ENCODE measurements at regions of chr5 and their contacts with region 1.

Region 1: GRCh38 chr5:76175051-76175666 is 92.0 kb downstream of the SV2C start:
- DNase-seq: peak; percentile 72
- ATAC-seq: peak; percentile 85
- H3K4me3 Mint-ChIP-seq: no peak overlapping the region
- H3K27ac Mint-ChIP-seq: no peak overlapping the region
- H3K4me1 Mint-ChIP-seq: peaks cover 14% of the 10 kb centered on the region
- H3K27me3 Mint-ChIP-seq: no peaks in the 10 kb centered on the region
- CTCF ChIP-seq: peak; percentile 55

Region 2: DNA sequence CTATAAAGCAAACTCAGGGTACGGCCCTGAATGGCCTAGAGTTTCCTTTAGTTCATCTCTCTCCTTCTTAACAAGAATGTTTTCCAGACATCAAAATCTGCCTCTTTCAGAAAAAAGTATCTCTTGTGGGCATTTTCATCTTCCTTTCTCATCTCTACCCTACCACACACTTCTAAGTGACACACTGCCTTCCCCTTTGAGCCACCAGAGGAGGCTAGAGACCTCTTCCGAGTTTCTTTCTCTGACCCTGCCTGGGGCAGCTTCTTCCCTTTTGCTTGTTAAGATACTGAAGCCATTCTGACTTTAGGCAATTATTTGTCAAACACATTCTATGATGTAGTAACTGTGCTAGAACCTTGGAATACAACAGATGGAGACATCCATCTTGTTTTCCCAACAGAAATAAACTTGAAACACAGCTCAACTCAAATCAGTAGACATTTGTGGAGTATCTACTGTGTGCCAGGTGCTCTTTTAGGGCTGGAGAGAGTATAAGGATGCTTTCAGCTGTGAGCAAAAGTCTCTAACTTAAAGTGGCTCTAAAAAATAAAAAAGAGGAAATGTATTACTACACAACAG is 100.6 kb before region 1 on chr5:
- CTCF ChIA-PET with region 1: interaction called, 42 read pairs
- POLR2A ChIA-PET with region 1: no interaction called
- DNase-seq: peak; percentile 42
- ATAC-seq: peak; percentile 85
- H3K4me3 Mint-ChIP-seq: no peak overlapping the region
- H3K27ac Mint-ChIP-seq: no peak overlapping the region
- H3K4me1 Mint-ChIP-seq: no peaks in the 10 kb centered on the region
- H3K27me3 Mint-ChIP-seq: peaks cover 44% of the 10 kb centered on the region
- CTCF ChIP-seq: peak; percentile 63

Region 3: DNA sequence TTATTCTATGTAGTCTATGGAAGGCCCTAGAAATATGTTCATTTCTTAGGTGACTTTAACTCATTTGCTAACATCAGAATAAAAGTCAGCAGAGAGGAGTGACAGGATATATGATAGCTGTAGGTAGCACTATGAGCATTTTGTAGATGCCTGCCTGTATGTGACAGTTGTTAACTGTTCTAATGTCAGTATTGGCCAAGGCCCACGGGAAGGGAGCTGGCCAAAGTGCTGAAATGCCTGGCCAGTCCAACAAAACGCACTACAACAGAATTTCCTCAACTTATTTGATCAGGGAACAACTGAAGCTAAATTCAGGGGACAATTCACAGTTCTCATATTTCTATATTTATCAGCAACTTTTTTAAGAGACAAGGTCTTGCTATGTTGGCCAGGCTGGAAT is 71.1 kb before region 1 on chr5:
- CTCF ChIA-PET with region 1: interaction called, 31 read pairs
- POLR2A ChIA-PET with region 1: no interaction called
- DNase-seq: peak; percentile 65
- ATAC-seq: peak; percentile 79
- H3K4me3 Mint-ChIP-seq: no peak overlapping the region
- H3K27ac Mint-ChIP-seq: no peak overlapping the region
- H3K4me1 Mint-ChIP-seq: no peaks in the 10 kb centered on the region
- H3K27me3 Mint-ChIP-seq: no peaks in the 10 kb centered on the region
- CTCF ChIP-seq: no peak

Region 4: DNA sequence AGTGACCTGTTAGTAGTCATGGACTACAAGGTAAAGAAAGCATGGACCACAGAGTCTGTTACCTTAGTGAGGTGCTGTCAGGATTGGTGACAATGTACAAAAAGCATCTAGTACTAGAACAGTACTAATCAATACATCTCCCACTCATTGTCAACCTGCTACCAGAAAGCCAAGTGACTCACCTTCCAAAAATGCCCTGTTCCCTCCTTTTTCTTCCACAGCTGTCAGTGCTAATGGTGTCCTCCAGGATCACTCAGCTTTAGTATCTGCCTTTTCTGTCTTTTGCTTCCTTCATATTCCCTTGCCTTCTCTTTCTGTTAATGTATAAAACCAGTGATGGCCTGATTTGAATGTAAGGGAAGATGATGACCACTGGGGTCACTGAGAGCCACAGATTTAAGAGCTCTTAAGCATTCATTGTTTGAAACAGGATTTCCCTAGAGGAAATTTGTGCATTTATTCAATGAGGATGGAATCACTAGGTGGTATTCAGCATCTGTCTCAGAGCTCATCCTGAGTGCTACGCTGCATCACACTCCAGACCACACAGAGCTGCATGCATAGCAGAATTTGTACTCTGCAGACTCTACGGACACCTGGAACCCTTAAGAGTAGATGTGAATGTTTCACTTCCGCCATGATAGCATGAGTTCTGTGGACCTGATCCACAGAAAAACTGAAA is 21.0 kb before region 1 on chr5:
- CTCF ChIA-PET with region 1: interaction called, 11 read pairs
- POLR2A ChIA-PET with region 1: no interaction called
- DNase-seq: no peak
- ATAC-seq: no peak
- H3K4me3 Mint-ChIP-seq: no peak overlapping the region
- H3K27ac Mint-ChIP-seq: no peak overlapping the region
- H3K4me1 Mint-ChIP-seq: peaks cover 15% of the 10 kb centered on the region
- H3K27me3 Mint-ChIP-seq: peaks cover 4% of the 10 kb centered on the region
- CTCF ChIP-seq: no peak

Region 5: DNA sequence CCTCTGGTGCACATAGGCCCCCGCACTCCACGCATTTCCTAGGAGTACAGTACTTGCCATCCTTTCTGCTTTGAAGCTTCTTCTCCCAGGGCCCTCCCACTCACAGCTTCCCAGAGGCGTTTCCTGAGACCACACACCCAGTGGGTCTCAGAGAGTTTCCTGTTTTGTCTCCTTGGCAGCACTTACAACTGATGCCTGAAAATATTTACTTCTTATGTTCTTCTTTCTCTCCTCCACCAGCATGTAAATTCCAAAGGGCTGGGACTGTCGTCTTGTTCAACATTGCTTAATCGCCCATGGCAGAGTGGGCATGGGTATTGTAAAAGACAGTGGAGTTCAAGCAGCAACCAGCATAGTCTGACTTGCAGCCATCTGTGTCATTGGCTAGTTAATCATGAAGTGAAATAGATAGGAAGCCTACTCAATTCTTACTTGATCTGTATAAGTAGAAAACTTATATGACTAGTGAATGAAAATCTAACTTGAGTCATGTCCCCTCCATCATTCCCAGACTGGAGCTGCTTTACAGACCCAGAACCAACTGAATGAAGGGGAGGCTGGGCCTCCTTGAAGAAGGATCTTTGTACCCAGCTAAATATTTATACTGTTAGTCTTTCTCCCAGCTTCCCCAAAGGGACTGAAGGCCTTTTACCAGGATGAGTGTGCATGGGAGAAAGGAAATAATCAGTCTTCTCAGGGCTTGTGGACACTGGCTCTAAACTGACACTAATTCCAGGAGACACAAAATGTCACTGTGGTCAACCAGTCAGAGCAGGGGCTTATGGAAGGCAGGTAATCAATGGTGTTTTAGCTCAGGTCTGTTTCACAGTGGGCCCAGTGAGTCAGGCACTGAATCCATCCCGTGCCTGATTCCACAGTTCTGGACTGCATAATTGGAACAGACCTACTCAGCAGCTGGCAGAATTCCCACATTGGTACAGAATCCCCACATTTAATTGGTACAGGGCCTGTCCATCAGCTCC is 24.5 kb after region 1 on chr5:
- CTCF ChIA-PET with region 1: interaction called, 25 read pairs
- POLR2A ChIA-PET with region 1: no interaction called
- DNase-seq: no peak
- ATAC-seq: peak; percentile 27; the same call in 1 of the 2 replicates
- H3K4me3 Mint-ChIP-seq: no peak overlapping the region
- H3K27ac Mint-ChIP-seq: no peak overlapping the region
- H3K4me1 Mint-ChIP-seq: peaks cover 48% of the 10 kb centered on the region
- H3K27me3 Mint-ChIP-seq: no peaks in the 10 kb centered on the region
- CTCF ChIP-seq: no peak

Region 6: DNA sequence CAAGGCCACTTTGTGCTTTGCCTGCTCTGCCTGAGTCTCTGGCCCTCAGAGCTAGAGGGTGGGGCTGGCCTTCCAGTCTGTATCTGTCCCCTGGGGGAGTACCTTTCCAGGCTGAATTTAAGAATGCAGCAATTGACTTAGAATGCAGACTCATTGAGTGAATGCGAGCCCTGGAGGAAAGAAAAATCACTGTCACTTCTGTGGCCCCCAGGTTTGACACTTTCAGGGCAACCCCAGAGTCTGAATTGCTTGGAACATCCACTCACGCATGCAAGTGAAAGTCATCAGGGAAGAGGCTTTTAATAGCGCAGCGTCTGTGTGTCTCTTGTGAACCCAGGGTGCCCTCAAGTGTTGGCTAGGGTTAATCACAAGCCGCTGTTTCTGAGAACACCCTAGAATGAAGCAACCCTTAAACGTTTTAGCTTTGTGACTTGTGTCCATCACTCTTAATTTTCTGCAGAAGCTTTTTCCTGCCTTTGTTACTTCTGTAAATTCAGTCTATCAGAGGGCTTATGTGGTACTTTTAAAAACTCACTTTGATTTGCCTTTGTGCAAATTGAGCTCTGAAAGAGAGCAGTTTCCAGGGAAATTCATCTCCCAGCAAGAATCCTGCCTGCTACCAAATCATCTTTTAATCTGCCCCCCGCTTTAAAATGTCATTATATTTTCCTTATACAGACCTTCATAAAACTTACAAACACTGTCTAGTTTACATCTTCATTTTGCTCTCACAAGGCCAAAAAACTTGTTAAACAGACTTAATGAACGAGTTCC is 81.1 kb after region 1 on chr5:
- CTCF ChIA-PET with region 1: interaction called, 13 read pairs
- POLR2A ChIA-PET with region 1: no interaction called
- DNase-seq: peak; percentile 59
- ATAC-seq: peak; percentile 98
- H3K4me3 Mint-ChIP-seq: no peak overlapping the region
- H3K27ac Mint-ChIP-seq: no peak overlapping the region
- H3K4me1 Mint-ChIP-seq: peaks cover 5% of the 10 kb centered on the region
- H3K27me3 Mint-ChIP-seq: no peaks in the 10 kb centered on the region
- CTCF ChIP-seq: 0 out of 2 replicates have a peak, but pooled peaks have one; percentile 34

Measured in WTC11 (cell line).